Tibial artery (tissue), 4 donors: ENCODE measurements at regions of chr11 and their contacts with region 1.

Region 1: DNA sequence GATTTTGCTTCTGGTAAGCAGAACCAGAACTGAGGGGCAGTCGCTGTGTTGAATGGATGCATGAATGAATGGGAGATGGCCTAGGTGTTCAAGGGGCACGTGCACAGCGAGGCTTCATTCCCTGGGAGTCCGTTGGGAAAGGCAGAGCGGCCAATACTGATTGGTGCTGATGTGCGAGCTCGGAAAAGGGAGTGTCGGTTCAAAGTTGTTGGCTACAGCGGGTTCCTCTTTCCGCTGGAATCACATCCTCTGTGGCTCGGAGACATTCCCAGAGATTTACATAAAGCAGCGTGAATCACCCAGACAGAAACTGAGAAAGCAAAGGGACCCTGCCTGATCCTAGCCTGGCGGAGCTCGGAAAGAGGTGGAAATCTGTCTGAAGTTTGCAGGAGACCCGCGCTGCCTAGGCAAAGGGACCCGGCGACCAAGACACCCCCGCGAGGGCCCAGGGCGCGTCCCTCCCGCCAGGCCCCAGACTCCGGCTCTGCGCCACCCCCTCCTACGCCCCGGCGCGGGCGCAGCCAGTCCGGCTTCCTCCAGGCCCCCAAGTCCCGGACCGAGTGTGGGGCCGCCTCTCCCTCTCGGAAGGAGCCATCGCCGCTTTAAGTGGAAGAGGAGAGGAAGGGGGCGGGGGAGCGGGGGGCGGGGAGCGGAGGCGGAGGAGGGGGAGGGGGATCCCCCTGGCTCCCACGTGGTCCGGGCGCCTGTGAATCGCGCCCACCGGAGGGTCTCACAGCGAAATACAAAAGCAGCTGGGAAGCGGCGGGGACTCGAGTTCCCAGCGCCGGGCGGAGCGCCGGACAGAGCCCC is at the start of gene FJX1:
- DNase-seq: peak; percentile 37 to 68
- H3K4me3 ChIP-seq: peak within 1 kb of the TSS; percentile 57 to 70
- H3K27ac ChIP-seq: peak within 1 kb of the TSS; percentile 48 to 60
- H3K4me1 ChIP-seq: peaks cover 0 to 36% (median 24%) of the 10 kb centered on the region in 4 donors
- H3K27me3 ChIP-seq: peaks cover 0 to 27% of the 10 kb centered on the region in 2 donors
- CTCF ChIP-seq: no peak

Region 2: DNA sequence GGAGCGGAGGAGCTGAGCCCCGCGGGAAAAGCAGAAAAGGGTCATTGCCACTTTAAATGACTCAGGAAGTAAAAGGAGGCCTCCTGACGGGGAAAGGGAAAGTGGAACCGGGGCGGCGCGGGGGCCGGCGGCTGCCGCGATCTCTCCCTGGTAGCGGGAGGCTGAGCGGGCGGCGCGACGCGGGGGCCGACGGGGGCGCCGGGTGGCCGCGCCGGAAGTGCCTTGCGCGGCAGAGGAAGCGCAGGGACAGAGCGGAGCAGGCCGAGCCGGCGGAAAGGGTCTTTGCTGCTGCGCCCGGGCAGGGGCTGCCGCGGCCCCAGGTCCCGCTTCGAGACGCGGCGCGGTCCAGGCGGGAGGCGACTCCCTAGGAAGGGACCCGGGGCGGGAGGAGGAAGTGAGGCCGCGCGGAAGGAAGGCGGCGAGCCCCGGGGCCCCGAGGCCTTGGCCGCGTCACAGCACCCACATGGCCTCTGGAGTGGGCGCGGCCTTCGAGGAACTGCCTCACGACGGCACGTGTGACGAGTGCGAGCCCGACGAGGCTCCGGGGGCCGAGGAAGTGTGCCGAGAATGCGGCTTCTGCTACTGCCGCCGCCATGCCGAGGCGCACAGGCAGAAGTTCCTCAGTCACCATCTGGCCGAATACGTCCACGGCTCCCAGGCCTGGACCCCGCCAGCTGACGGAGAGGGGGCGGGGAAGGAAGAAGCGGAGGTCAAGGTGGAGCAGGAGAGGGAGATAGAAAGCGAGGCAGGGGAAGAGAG is 44.9 kb after region 1 on chr11 and contains the start of gene TRIM44:
- intact Hi-C with region 1: loop called (anchors 5 kb)
- DNase-seq: peak; percentile 76 to 92
- H3K4me3 ChIP-seq: peak within 1 kb of the TSS; percentile 81 to 97
- H3K27ac ChIP-seq: peak within 1 kb of the TSS; percentile 92 to 95
- H3K4me1 ChIP-seq: peaks cover 0 to 24% (median 13%) of the 10 kb centered on the region in 4 donors
- H3K27me3 ChIP-seq: no peaks in the 10 kb centered on the region
- CTCF ChIP-seq: no peak

Region 3: GRCh38 chr11:35822815-35823495 is 205.1 kb after region 1 on chr11:
- intact Hi-C with region 1: loop called (anchors 10 kb)
- DNase-seq: no peak
- H3K4me3 ChIP-seq: no peak overlapping the region
- H3K27ac ChIP-seq: no peak overlapping the region
- H3K4me1 ChIP-seq: peaks cover 0 to 7% (median 0%) of the 10 kb centered on the region in 4 donors
- H3K27me3 ChIP-seq: no peaks in the 10 kb centered on the region
- CTCF ChIP-seq: no peak

Region 4: DNA sequence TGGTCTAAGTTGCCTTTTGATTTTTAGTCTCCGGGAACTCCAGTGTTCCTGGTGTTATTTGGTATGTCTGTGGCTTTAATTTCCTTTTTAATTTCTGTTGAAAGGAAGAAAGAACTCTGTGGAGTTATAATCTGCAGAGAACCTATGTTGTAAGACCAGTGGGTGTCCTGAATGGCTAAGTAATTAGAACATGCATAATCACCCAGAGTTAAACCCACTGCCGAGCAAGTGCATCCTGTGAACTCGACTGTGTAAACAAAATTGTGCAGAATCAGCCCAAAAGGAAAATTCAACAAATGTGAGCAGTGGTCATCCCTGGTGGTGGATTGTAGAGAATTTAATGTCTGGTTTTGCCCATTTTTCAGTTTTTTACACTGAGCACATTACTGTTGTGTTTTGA is 508.8 kb after region 1 on chr11:
- intact Hi-C with region 1: loop called (anchors 5 kb)
- DNase-seq: no peak
- H3K4me3 ChIP-seq: no peak overlapping the region
- H3K27ac ChIP-seq: no peak overlapping the region
- H3K4me1 ChIP-seq: peaks cover 0 to 14% (median 10%) of the 10 kb centered on the region in 4 donors
- H3K27me3 ChIP-seq: no peaks in the 10 kb centered on the region
- CTCF ChIP-seq: no peak

Region 5: GRCh38 chr11:36265793-36266628 is 648.1 kb after region 1 on chr11:
- intact Hi-C with region 1: loop called (anchors 5 kb)
- DNase-seq: peak in 1 of 2 donors; percentile 27
- H3K4me3 ChIP-seq: no peak overlapping the region
- H3K27ac ChIP-seq: no peak overlapping the region
- H3K4me1 ChIP-seq: peaks cover 0 to 3% (median 0%) of the 10 kb centered on the region in 4 donors
- H3K27me3 ChIP-seq: peaks cover 0 to 3% of the 10 kb centered on the region in 2 donors
- CTCF ChIP-seq: peak; percentile 75 to 76

Region 6: GRCh38 chr11:36492724-36493304 is 874.9 kb after region 1 on chr11:
- intact Hi-C with region 1: loop called (anchors 10 kb)
- DNase-seq: no peak
- H3K4me3 ChIP-seq: no peak overlapping the region
- H3K27ac ChIP-seq: no peak overlapping the region
- H3K4me1 ChIP-seq: peaks cover 0 to 5% (median 0%) of the 10 kb centered on the region in 4 donors
- H3K27me3 ChIP-seq: no peaks in the 10 kb centered on the region
- CTCF ChIP-seq: peak; percentile 61 to 74